OCI-LY7 (cell line): ENCODE measurements at regions of chr11 and their contacts with region 1.

Region 1: DNA sequence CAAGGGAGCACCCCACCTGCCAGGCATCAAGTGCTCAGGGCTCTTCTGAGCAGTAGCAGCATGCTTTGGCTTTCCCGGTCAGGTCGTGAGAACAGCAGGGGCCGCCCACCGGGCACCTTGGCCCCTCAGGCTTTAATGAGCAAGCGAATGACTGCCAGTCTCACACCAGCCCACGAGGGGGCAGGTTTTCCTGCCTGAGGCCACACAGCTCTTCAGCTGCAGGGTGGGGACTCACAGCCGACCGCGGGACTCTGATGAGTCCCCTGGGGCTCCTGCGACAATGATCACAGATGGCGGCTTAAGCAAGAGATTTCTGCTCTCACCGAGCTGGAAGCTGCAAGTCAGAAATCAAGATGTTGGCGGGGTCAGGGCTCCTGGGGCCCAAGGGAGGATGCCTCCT is 14.3 kb upstream of the FGF19 start:
- DNase-seq: peak; percentile 90
- H3K4me3 ChIP-seq: no peak overlapping the region
- H3K27ac ChIP-seq: no peak overlapping the region
- H3K4me1 ChIP-seq: peaks cover 9% of the 10 kb centered on the region
- CTCF ChIP-seq: peak; percentile 84

Region 2: DNA sequence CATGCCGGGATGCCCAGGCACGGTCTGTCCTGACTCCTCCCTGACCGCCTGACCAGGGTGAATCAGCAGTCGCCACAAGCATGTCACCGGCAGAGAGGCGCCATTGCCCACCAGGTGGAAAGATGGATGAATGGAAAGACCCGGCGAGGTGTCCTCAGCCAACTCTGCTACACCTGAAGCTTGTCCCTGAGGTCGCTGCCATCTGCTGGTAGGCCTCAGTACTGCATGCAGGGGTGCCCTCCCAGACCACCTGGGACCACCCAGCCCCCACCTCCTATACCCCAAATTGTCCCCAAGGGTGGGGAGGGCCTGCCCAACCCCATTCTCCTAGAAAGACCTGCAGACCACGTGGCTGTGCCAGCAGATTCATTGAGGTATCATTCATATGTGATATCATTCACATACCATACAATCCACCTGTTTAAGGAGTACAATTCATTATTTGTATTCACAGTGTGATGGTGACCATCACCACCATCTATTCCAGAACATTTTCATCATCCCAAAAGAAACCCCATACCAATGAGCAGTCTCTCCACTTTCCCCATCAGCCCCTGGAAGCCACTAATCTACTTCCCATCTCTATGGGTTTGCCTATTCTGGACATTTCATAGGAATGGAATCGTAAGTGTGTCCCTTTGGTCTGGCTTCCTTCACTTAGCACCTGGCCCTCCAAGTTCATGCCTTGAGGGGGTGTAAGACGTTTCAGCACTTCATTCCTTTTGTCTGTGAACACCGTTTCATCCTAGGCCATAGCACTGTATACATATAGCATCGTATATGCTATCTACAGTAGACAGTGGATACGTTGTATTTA is 83.6 kb after region 1 on chr11:
- CTCF ChIA-PET with region 1: no interaction called
- POLR2A ChIA-PET with region 1: no interaction called
- intact Hi-C with region 1: loop called (anchors 5 kb)
- DNase-seq: peak; percentile 27
- H3K4me3 ChIP-seq: no peak overlapping the region
- H3K27ac ChIP-seq: no peak overlapping the region
- H3K4me1 ChIP-seq: no peaks in the 10 kb centered on the region
- CTCF ChIP-seq: peak; percentile 81

Region 3: GRCh38 chr11:69888483-69889076 is 170.4 kb after region 1 on chr11:
- CTCF ChIA-PET with region 1: no interaction called
- POLR2A ChIA-PET with region 1: no interaction called
- intact Hi-C with region 1: loop called (anchors 10 kb)
- DNase-seq: peak; percentile 64
- H3K4me3 ChIP-seq: no peak overlapping the region
- H3K27ac ChIP-seq: no peak overlapping the region
- H3K4me1 ChIP-seq: no peaks in the 10 kb centered on the region
- CTCF ChIP-seq: peak; percentile 86

Region 4: GRCh38 chr11:69899957-69900821 is 182.0 kb after region 1 on chr11:
- CTCF ChIA-PET with region 1: no interaction called
- POLR2A ChIA-PET with region 1: no interaction called
- intact Hi-C with region 1: no loop called
- DNase-seq: no peak
- H3K4me3 ChIP-seq: no peak overlapping the region
- H3K27ac ChIP-seq: no peak overlapping the region
- H3K4me1 ChIP-seq: no peaks in the 10 kb centered on the region
- CTCF ChIP-seq: no peak